Stomach (tissue), 19 donors: ENCODE measurements at regions of chr6 and their contacts with region 1.

Region 1: GRCh38 chr6:137709424-137710236 is 157.4 kb upstream of the TNFAIP3 start:
- DNase-seq: no peak
- H3K4me3 ChIP-seq: no peak overlapping the region
- H3K27ac ChIP-seq: no peak overlapping the region
- H3K4me1 ChIP-seq: peaks cover 7 to 30% (median 22%) of the 10 kb centered on the region in 4 donors
- H3K27me3 ChIP-seq: no peaks in the 10 kb centered on the region
- CTCF ChIP-seq: no peak
- EP300 ChIP-seq: no peak
- POLR2A ChIP-seq: no peak

Region 2: GRCh38 chr6:137873273-137873762 is 163.7 kb after region 1 on chr6:
- intact Hi-C with region 1: loop called (anchors 5 kb)
- DNase-seq: peak; percentile 78 to 89
- H3K4me3 ChIP-seq: peak overlapping the region; percentile 3 to 83 (median 40)
- H3K27ac ChIP-seq: peak overlapping the region in 4 of 5 donors; percentile 25 to 97 (median 94)
- H3K4me1 ChIP-seq: peaks cover 37 to 84% (median 56%) of the 10 kb centered on the region in 4 donors
- H3K27me3 ChIP-seq: no peaks in the 10 kb centered on the region
- CTCF ChIP-seq: no peak
- EP300 ChIP-seq: no peak
- POLR2A ChIP-seq: no peak

Region 3: GRCh38 chr6:137944793-137945498 is 235.3 kb after region 1 on chr6:
- intact Hi-C with region 1: loop called (anchors 5 kb)
- DNase-seq: peak in 1 of 2 donors; percentile 72
- H3K4me3 ChIP-seq: no peak overlapping the region
- H3K27ac ChIP-seq: no peak overlapping the region
- H3K4me1 ChIP-seq: peaks cover 0 to 13% (median 4%) of the 10 kb centered on the region in 4 donors
- H3K27me3 ChIP-seq: no peaks in the 10 kb centered on the region
- CTCF ChIP-seq: peak in 5 of 7 experiments; percentile 42 to 74 (median 67)
- EP300 ChIP-seq: no peak
- POLR2A ChIP-seq: no peak

Region 4: GRCh38 chr6:137989664-137990063 is 280.0 kb after region 1 on chr6:
- intact Hi-C with region 1: no loop called
- DNase-seq: no peak
- H3K4me3 ChIP-seq: no peak overlapping the region
- H3K27ac ChIP-seq: no peak overlapping the region
- H3K4me1 ChIP-seq: no peaks in the 10 kb centered on the region
- H3K27me3 ChIP-seq: peaks cover 0 to 9% (median 0%) of the 10 kb centered on the region in 3 donors
- CTCF ChIP-seq: no peak
- EP300 ChIP-seq: no peak
- POLR2A ChIP-seq: no peak